Esophagus squamous epithelium (tissue), 5 donors: ENCODE measurements at regions of chr2 and their contacts with region 1.

Region 1: GRCh38 chr2:20097879-20098714 is 46.7 kb upstream of the LAPTM4A start:
- DNase-seq: peak; percentile 18
- H3K4me3 ChIP-seq: no peak overlapping the region
- H3K27ac ChIP-seq: no peak overlapping the region
- H3K4me1 ChIP-seq: peaks cover 0 to 22% (median 4%) of the 10 kb centered on the region in 3 donors
- H3K27me3 ChIP-seq: no peaks in the 10 kb centered on the region
- CTCF ChIP-seq: peak; percentile 76 to 94 (median 87)
- POLR2A ChIP-seq: no peak

Region 2: DNA sequence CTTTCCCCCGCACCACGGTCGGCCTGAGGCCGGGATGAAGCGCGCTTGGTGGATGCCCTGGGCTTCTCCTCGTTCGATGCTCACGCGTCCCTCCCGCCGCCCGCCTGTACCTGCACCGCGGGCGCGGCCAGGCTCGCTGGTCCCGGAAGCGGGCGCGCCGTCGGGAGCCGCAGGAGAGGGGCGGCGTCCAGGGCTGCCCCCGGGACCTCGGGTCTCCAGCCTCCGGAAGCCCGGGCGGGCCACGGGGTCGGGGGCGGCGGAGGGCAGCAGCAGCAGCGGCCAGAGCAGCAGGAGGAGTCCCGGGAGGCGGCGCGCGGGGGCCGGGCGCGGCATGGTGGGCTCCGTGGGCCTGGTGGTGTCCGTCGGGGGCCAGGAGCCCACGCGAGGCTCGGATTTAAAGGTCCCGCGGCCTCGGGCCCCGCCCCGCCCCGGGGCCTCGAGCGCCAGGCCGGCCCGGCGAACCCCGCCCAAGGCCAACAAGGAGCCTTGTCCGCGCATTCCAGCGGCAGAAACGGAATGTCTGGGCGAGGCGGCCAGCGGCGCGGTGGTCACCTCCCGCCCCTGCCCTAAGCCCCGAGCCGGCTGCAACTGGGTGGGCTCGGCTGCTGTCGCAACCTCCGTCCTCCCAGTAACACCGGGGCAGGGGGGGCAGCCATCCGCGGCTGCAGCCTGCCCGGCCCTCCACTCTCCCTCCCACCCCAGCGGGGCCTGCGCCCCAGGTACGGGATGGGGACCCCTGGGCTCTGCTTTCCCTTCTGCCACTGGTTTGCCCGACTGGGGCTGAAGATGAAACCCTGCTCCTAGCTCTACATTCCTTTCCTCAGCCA is 85.6 kb before region 1 on chr2 and contains the start of gene MATN3:
- intact Hi-C with region 1: loop called (anchors 5 kb)
- DNase-seq: no peak
- H3K4me3 ChIP-seq: peak within 1 kb of the TSS; percentile 41 to 75 (median 52)
- H3K27ac ChIP-seq: peak within 1 kb of the TSS; percentile 59 to 80 (median 66)
- H3K4me1 ChIP-seq: peaks cover 0 to 19% (median 12%) of the 10 kb centered on the region in 3 donors
- H3K27me3 ChIP-seq: peaks cover 0 to 40% (median 0%) of the 10 kb centered on the region in 4 donors
- CTCF ChIP-seq: no peak
- POLR2A ChIP-seq: no peak
- total RNA-seq, gene MATN3: 0.45 to 1.3 (median 0.92) TPM in 3 of 4 donors, not detected in the other

Region 3: GRCh38 chr2:20264629-20265028 is 166.5 kb after region 1 on chr2:
- intact Hi-C with region 1: no loop called
- DNase-seq: no peak
- H3K4me3 ChIP-seq: no peak overlapping the region
- H3K27ac ChIP-seq: no peak overlapping the region
- H3K4me1 ChIP-seq: no peaks in the 10 kb centered on the region
- H3K27me3 ChIP-seq: no peaks in the 10 kb centered on the region
- CTCF ChIP-seq: no peak
- POLR2A ChIP-seq: no peak